Cardiac septum (tissue), 1 donor: ENCODE measurements at regions of chr1 and their contacts with region 1.

Region 1: DNA sequence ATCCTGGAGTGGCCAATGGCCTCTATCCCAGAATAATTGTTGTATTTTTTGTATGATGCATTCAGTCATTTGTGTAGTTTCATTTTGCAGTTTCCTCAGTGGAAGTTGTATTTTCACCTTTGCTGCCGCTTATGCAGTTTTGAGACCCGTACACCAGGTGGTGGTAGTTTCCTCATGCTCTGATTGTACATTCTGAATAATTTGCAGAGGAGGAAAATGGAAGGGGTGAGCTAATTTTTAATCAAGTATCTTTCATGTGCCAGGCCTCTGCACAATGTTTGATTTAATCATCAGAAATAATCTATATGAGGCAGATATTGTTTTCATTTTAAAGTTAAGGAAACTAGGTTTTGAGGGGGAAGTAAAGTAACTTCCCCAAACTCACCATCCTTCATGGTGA is 29.5 kb downstream of the HLX start:
- DNase-seq: no peak

Region 2: DNA sequence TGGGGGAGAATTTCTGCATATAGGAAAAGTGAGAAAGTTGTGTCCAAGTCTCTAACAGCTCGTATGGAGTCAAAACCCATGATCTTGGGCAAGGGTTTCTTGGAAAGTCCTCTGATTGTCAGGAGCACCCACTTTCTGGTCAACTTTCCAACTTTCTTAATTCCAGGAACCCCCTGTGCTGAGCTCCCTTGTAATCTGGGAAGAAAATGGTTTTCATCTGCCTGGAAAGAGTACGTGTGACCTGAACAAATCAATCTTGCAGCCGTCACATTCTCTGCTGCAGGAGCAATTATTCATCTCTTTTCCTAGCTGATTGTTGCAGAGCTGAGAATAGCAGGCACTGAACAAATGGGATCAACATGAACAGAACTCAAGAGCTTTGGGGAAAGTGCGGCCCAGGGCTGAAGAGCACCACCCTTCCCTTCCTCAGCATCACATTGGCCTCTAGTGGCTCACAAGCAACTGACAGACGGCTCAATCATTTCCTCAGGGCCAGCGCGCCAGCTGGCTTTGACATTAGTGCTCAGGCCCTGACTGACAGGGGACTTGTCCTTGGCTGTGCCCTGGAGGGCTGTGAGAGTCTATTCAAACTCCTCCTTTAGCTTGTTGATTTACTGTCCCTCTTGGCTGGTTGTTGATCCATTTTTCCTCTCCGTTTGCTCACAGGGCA is 265.7 kb after region 1 on chr1:
- intact Hi-C with region 1: loop called (anchors 2 kb)
- DNase-seq: peak; percentile 82